ENCODE measurements at regions of chr1 and their contacts with region 1.

Region 1: DNA sequence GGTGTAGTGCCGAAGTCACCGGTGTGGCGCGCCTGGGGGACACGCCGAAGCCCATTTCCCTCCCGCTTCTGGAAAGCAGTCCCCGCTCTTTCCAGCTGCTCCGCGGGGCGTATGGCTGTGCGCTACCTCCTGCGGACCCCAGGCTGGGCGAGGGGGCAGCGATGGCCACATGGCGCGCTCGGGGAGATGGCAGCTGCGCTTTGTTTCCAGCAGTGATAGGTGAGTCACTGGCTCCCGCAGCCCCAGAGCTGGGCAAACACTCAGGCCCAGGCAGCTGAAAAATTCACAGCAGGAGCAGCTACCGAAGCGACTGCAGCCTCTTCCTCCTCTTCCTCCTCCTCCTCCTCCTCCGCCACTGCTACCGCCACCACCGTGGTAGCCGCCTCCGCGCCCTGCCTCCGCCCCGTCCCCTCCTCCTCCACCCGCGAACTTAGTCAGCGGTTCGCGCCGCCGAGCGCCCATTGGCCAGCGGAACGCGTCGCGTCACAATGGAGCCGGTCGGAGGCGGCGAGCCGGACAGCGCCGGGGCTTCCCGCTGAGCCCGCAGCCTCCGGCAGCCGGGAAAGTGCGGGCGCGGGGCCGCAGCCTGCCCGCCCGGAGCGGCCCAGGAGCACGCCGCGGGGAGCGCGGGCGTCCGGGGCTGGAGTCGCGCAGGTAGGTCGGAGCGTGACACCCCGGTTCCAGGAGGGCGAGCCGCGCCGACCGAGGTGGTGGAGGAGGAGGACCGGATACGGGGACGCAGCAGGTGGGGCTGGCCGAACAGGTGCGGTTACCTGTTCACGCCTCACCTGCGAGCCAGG is at the start of gene LRRC8B:
- DNase-seq: peak; percentile 98
- total RNA-seq, gene LRRC8B: 4.5 TPM

Region 2: GRCh38 chr1:89454845-89455521 is 69.6 kb before region 1 on chr1:
- intact Hi-C with region 1: no loop called
- DNase-seq: no peak

Region 3: GRCh38 chr1:89483010-89483756 is 41.4 kb before region 1 on chr1:
- intact Hi-C with region 1: loop called (anchors 2 kb)
- DNase-seq: peak; percentile 80